ENCODE measurements at regions of chr12 and their contacts with region 1.

Region 1: DNA sequence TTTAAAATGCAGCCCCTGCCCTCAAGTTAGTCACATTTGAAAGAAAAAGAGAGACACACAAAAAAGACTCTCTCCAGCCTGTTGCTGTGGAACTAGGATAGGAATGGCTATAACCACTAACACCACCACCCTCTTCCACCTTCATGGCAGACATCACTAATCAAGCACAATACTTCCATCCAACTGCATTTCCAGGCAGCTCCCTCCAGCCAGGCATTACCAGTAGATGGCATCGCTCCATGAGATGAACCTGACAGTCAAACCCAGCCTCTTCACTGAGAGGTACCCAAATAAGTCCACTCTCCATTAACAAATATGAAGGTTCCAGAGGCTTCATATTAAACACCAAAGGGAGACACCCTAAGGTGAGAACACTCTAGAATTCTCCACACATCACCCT is 24.4 kb downstream of the SLC8B1 start:
- DNase-seq: no peak
- H3K4me3 Mint-ChIP-seq: no peak overlapping the region
- H3K27ac Mint-ChIP-seq: no peak overlapping the region
- H3K4me1 Mint-ChIP-seq: no peaks in the 10 kb centered on the region
- H3K27me3 Mint-ChIP-seq: no peaks in the 10 kb centered on the region

Region 2: GRCh38 chr12:113422030-113422885 is 111.8 kb after region 1 on chr12 and contains the start of gene SDSL:
- intact Hi-C with region 1: loop called (anchors 1 kb)
- DNase-seq: peak; percentile 17
- H3K4me3 Mint-ChIP-seq: peak within 1 kb of the TSS; percentile 81
- H3K27ac Mint-ChIP-seq: peak within 1 kb of the TSS; percentile 79
- H3K4me1 Mint-ChIP-seq: peaks cover 11% of the 10 kb centered on the region
- H3K27me3 Mint-ChIP-seq: peaks cover 4% of the 10 kb centered on the region
- total RNA-seq, gene SDSL: 0.52 and 0.54 TPM in 2 replicates